IMR-90 (cell line): ENCODE measurements at regions of chr1 and their contacts with region 1.

Region 1: GRCh38 chr1:91511386-91511785 is 10.7 kb downstream of the CDC7 start:
- DNase-seq: peak; percentile 68
- ATAC-seq: peak; percentile 69
- H3K4me3 ChIP-seq: no peak overlapping the region
- H3K27ac ChIP-seq: no peak overlapping the region
- H3K4me1 ChIP-seq: no peaks in the 10 kb centered on the region
- H3K27me3 ChIP-seq: no peaks in the 10 kb centered on the region
- CTCF ChIP-seq: peak; percentile 68
- POLR2A ChIP-seq: no peak
- RAD21 ChIP-seq: peak; percentile 84

Region 2: DNA sequence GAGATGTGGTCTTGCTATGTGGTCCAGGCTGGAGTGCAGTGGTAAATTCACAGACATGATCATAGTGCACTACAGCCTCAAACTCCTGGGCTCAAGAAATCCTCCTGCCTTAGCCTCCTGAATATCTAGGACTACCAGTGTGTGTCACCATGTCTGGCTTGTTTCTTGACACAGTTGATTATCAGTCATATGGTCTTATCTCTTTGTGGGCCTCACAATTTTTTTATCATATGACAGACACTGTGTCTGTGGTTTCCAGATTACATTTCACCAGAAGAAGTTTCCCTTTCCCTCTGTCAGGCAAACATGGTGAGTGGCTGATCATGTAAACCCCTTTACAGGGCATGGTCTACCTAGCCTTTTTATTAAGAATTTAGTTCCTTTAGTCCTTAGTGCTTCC is 202.8 kb before region 1 on chr1:
- CTCF ChIA-PET with region 1: no interaction called
- POLR2A ChIA-PET with region 1: no interaction called
- dilution Hi-C with region 1: no loop called
- in situ Hi-C with region 1: no loop called
- intact Hi-C with region 1: no loop called
- DNase-seq: no peak
- ATAC-seq: no peak
- H3K4me3 ChIP-seq: no peak overlapping the region
- H3K27ac ChIP-seq: no peak overlapping the region
- H3K4me1 ChIP-seq: no peaks in the 10 kb centered on the region
- H3K27me3 ChIP-seq: no peaks in the 10 kb centered on the region
- CTCF ChIP-seq: no peak
- POLR2A ChIP-seq: no peak
- RAD21 ChIP-seq: no peak

Region 3: DNA sequence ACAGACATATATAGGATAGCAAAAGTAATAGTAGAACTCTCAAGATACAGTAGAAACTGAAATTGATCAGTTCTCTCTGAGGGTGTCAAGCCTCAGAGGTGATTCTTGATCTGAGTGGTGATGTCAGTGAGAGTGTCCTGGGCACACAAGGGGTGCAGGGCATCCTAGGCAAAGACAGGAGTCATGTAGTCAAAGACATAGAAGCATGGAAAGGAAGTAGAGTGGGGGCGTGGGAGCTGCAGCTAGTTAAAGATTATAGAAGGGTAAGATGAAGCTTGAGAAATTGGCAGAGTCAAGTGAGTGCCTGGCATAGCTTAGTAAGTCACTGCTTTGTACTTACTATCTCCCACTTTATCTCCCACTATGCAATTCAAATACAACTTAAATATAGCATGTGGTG is 12.1 kb after region 1 on chr1:
- CTCF ChIA-PET with region 1: interaction called, 10 read pairs
- POLR2A ChIA-PET with region 1: no interaction called
- dilution Hi-C with region 1: no loop called
- in situ Hi-C with region 1: no loop called
- intact Hi-C with region 1: no loop called
- DNase-seq: peak; percentile 26
- ATAC-seq: no peak
- H3K4me3 ChIP-seq: no peak overlapping the region
- H3K27ac ChIP-seq: no peak overlapping the region
- H3K4me1 ChIP-seq: no peaks in the 10 kb centered on the region
- H3K27me3 ChIP-seq: no peaks in the 10 kb centered on the region
- CTCF ChIP-seq: no peak
- POLR2A ChIP-seq: no peak
- RAD21 ChIP-seq: no peak

Region 4: GRCh38 chr1:91732291-91733107 is 221.1 kb after region 1 on chr1:
- CTCF ChIA-PET with region 1: no interaction called
- POLR2A ChIA-PET with region 1: no interaction called
- dilution Hi-C with region 1: no loop called
- in situ Hi-C with region 1: no loop called
- intact Hi-C with region 1: loop called (anchors 10 kb)
- DNase-seq: peak; percentile 91
- ATAC-seq: peak; percentile 76
- H3K4me3 ChIP-seq: no peak overlapping the region
- H3K27ac ChIP-seq: no peak overlapping the region
- H3K4me1 ChIP-seq: peaks cover 23% of the 10 kb centered on the region
- H3K27me3 ChIP-seq: no peaks in the 10 kb centered on the region
- CTCF ChIP-seq: no peak
- POLR2A ChIP-seq: no peak
- RAD21 ChIP-seq: no peak

Region 5: GRCh38 chr1:91924146-91924545 is 412.8 kb after region 1 on chr1:
- CTCF ChIA-PET with region 1: interaction called, 30 read pairs
- POLR2A ChIA-PET with region 1: no interaction called
- dilution Hi-C with region 1: no loop called
- in situ Hi-C with region 1: loop called (anchors 5 kb)
- intact Hi-C with region 1: loop called (anchors 1 kb)
- DNase-seq: peak; percentile 91
- ATAC-seq: peak; percentile 75
- H3K4me3 ChIP-seq: no peak overlapping the region
- H3K27ac ChIP-seq: no peak overlapping the region
- H3K4me1 ChIP-seq: peaks cover 4% of the 10 kb centered on the region
- H3K27me3 ChIP-seq: no peaks in the 10 kb centered on the region
- CTCF ChIP-seq: no peak
- POLR2A ChIP-seq: no peak
- RAD21 ChIP-seq: no peak

Region 6: GRCh38 chr1:92291372-92291999 is 780.1 kb after region 1 on chr1:
- CTCF ChIA-PET with region 1: no interaction called
- POLR2A ChIA-PET with region 1: no interaction called
- dilution Hi-C with region 1: no loop called
- in situ Hi-C with region 1: loop called (anchors 10 kb)
- intact Hi-C with region 1: loop called (anchors 1 kb)
- DNase-seq: peak; percentile 77
- ATAC-seq: peak; percentile 92
- H3K4me3 ChIP-seq: no peak overlapping the region
- H3K27ac ChIP-seq: no peak overlapping the region
- H3K4me1 ChIP-seq: no peaks in the 10 kb centered on the region
- H3K27me3 ChIP-seq: no peaks in the 10 kb centered on the region
- CTCF ChIP-seq: peak; percentile 87
- POLR2A ChIP-seq: no peak
- RAD21 ChIP-seq: peak; percentile 85

Region 7: DNA sequence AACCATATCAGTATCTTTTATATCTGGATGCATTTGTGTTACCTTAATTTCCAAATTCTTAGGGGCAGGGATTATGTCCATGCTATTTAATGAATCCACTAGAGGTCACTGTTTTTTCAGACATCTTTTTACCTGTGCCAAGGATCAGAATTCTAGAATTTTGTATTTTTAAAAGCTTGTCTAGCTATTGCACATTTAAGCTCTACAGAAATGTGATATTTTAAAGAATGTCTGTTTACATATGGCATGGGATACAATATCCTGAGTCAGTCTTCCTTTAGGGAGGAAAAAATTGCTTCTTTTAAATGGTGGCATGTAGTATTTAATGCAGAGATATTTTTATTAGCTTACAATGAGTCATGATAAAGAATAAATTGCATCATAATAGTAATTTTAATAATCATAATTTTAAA is 798.8 kb after region 1 on chr1:
- CTCF ChIA-PET with region 1: interaction called, 3 read pairs
- POLR2A ChIA-PET with region 1: interaction called, 14 read pairs
- dilution Hi-C with region 1: no loop called
- in situ Hi-C with region 1: no loop called
- intact Hi-C with region 1: no loop called
- DNase-seq: peak; percentile 50
- ATAC-seq: peak; percentile 66
- H3K4me3 ChIP-seq: no peak overlapping the region
- H3K27ac ChIP-seq: no peak overlapping the region
- H3K4me1 ChIP-seq: no peaks in the 10 kb centered on the region
- H3K27me3 ChIP-seq: no peaks in the 10 kb centered on the region
- CTCF ChIP-seq: peak; percentile 65
- POLR2A ChIP-seq: no peak
- RAD21 ChIP-seq: peak; percentile 64